HepG2 (cell line): ENCODE measurements at regions of chr21 and their contacts with region 1.

Region 1: DNA sequence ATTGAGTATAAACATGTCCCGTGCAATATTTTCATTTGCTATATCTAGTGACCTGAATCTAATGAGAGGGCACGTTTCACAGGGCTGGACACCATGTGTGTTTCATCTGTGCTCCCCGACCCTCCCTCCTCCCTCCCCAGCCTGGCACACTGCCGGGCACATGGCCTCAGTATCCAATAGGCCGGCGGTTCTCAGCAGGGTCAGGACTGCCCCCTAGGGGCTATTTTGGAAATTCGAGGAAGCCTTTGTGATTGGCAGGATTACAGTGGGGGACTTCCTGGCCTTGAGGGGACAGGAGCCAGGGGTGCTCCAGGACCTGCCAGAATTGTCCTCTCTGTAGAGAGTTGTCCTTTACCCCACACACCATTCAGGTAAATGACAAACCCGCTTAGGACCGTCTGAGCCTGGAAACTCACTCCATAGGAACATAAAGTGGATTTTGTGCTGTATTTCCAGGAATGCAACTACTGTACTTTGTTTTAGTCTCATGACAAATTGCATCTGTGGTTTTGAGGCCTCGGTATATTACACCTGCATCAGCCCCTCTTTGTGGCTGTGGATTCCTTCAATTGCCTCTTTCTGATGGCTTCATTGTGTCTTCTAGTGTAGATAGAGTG is 109.5 kb upstream of the SIM2 start:
- DNase-seq: peak; percentile 15
- ATAC-seq: peak; percentile 81
- H3K4me3 ChIP-seq: no peak overlapping the region
- H3K27ac ChIP-seq: no peak overlapping the region
- H3K4me1 ChIP-seq: no peaks in the 10 kb centered on the region
- H3K27me3 ChIP-seq: peaks cover 1 to 34% of the 10 kb centered on the region in 2 experiments; a peak in 3 of 5 replicates
- CTCF ChIP-seq: peak; percentile 75
- EP300 ChIP-seq: no peak
- POLR2A ChIP-seq: no peak
- RAD21 ChIP-seq: no peak

Region 2: DNA sequence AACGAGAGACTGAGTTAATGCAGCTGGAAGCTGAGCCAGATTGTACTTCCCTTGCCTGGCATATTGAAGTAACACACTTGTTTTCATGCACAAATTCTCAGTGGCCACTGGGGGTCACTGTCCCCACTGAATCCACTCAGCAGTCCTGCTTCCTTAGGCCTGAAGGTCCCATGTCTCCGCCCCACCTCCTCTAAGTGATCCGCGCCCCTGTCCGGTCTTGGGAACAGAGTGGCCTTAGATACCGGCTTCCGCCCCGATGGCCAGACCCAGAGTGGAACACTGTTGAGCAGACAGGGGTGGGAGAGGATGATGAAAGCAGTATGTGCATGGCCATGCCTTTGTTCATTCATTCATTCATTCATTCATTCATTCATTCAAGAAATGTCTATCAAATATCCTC is 169.5 kb before region 1 on chr21:
- CTCF ChIA-PET with region 1: interaction called, 9 read pairs
- POLR2A ChIA-PET with region 1: no interaction called
- in situ Hi-C with region 1: loop called (anchors 5 kb)
- intact Hi-C with region 1: loop called (anchors 1 kb)
- DNase-seq: peak; percentile 63
- ATAC-seq: peak; percentile 79
- H3K4me3 ChIP-seq: no peak overlapping the region
- H3K27ac ChIP-seq: no peak overlapping the region
- H3K4me1 ChIP-seq: 0 out of 2 replicates have a peak, but pooled peaks cover 9% of the 10 kb centered on the region
- H3K27me3 ChIP-seq: no peaks in the 10 kb centered on the region
- CTCF ChIP-seq: peak; percentile 93
- EP300 ChIP-seq: no peak
- POLR2A ChIP-seq: no peak
- RAD21 ChIP-seq: peak; percentile 55

Region 3: DNA sequence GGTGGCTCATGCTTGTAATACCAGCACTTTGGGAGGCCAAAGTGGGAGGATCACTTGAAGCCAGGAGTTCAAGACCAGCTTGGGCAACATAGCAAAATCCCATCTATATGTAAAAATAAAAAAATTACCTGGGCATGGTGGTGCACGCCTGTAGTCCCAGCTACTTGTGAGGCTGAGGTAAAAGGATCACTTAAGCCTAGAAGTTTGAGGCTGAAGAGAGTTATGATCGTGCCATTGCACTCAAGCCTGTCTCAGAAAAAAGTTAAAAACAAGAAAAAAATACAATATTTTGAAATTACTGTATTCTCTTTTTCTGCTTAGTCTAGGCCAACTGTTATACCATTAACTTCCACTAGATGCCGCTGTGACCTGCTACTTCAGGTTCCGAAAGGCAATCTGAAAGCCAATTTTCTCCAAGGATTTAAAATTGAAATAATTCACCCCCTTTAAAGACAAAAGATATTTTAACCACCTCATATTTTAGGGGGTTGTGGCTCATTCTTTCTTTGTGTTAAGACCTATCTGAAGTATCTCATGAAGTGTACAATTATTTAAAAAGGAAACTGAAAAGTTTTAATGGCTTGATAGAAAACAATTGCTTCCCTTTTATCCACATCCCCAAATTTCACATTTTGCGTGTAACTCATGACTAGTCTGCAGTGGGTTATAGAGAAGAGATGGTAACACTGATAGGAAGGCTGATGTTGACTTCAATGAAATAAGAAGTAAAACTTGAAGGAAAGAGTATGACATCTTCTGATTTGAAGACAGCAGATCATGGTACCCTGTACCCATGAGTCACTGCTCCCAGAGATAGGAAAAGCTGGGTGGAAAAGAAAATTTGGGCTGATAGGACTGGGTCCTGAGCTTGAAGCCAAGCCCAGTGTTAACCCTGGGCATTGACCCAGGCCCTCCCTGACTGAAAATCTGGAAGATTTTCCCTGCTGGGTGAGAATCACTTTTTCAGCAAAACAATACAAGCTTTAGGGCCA is 85.1 kb before region 1 on chr21:
- CTCF ChIA-PET with region 1: interaction called, 5 read pairs
- POLR2A ChIA-PET with region 1: no interaction called
- in situ Hi-C with region 1: no loop called
- intact Hi-C with region 1: loop called (anchors 10 kb)
- DNase-seq: peak; percentile 27
- ATAC-seq: no peak
- H3K4me3 ChIP-seq: no peak overlapping the region
- H3K27ac ChIP-seq: no peak overlapping the region
- H3K4me1 ChIP-seq: peaks cover 49% of the 10 kb centered on the region
- H3K27me3 ChIP-seq: peaks cover 0 to 12% of the 10 kb centered on the region in 2 experiments; a peak in 3 of 5 replicates
- CTCF ChIP-seq: peak; percentile 70
- EP300 ChIP-seq: no peak
- POLR2A ChIP-seq: no peak
- RAD21 ChIP-seq: peak; percentile 26; the same call in 1 of the 2 replicates

Region 4: DNA sequence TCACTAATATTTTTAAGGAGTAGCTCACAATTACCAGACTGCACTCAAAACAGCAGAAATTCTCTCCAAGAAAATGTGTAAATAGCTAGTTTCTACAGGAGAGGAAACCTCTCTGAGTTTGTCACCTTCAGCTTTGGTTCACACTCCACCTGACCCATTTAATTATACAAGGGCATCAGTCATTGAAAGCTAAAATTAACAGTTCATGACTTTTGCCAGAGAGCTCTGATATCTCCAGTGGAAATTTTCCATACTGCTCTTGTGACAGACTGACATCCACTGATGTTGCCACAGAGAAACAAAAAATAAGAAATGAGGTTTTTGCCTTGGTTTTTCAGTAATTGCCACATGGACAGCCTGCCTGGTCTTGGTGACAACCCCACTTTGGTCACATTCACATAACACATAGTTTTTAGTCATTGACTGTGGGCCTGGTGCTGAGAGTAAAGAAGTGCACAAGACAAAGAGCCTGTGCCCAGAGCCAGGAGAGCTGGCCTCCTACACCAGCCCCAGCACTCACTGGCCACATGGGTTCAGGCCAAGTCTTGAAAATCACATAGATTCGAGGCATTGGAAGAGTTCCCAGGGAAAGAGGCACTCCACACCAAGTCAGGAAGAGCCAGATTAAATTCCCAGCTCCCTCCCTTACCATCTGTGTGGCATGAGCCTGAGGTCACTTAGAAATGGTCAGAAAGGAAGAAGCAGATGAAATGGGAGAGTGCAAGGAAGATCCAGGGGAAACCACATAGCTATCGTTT is 95.7 kb after region 1 on chr21:
- CTCF ChIA-PET with region 1: no interaction called
- POLR2A ChIA-PET with region 1: no interaction called
- in situ Hi-C with region 1: no loop called
- intact Hi-C with region 1: no loop called
- DNase-seq: no peak
- ATAC-seq: no peak
- H3K4me3 ChIP-seq: no peak overlapping the region
- H3K27ac ChIP-seq: no peak overlapping the region
- H3K4me1 ChIP-seq: no peaks in the 10 kb centered on the region
- H3K27me3 ChIP-seq: peaks cover 3 to 36% of the 10 kb centered on the region in 2 experiments; a peak in 4 of 5 replicates
- CTCF ChIP-seq: no peak
- EP300 ChIP-seq: no peak
- POLR2A ChIP-seq: no peak
- RAD21 ChIP-seq: no peak

Region 5: GRCh38 chr21:37061926-37062592 is 472.6 kb after region 1 on chr21:
- CTCF ChIA-PET with region 1: no interaction called
- POLR2A ChIA-PET with region 1: no interaction called
- in situ Hi-C with region 1: no loop called
- intact Hi-C with region 1: no loop called
- DNase-seq: peak; percentile 56
- ATAC-seq: peak; percentile 10; the same call in 1 of the 3 replicates
- H3K4me3 ChIP-seq: no peak overlapping the region
- H3K27ac ChIP-seq: no peak overlapping the region
- H3K4me1 ChIP-seq: peaks cover 28% of the 10 kb centered on the region
- H3K27me3 ChIP-seq: no peaks in the 10 kb centered on the region
- CTCF ChIP-seq: no peak
- EP300 ChIP-seq: no peak
- POLR2A ChIP-seq: no peak
- RAD21 ChIP-seq: no peak